Endothelial cell of umbilical vein (primary cell): ENCODE measurements at regions of chr2 and their contacts with region 1.

Region 1: DNA sequence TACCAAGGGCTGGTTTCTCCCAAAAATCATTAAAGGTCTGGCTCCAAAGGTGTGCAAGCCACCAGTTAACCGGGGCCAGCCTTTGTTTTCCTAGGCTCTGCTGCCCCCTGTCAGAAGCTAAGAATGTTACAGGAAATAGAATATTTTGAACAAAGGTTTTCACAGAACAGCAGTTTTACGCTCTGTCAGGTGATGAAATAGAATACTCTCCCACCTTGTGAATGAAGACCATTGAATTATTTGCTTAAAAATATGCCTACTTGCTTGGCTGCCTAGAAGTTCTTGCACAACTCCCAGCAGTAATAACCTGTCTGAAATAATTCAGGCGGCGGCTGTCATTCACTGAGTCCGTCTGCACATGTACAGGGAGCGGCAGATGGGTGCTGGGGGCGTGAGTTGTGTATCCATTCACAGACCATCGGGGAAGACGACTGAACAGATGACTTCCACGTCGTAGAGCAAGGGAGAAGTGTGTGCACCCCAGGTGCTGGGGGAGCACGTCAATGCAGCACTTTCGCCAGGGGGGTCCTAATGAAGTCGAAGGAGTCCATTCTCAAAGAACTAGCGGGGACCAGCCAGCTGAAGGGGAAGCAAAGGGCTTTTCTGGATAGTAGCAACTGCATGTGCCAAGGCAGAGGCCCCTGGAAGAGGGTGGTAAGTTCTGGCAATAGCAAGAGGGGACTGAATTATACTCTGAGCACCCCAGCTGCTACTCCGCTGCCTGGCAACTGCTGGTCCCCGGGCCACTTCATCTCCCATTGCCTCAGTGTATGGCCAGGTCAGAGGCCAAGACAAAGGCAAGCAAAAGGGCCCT is 56.1 kb downstream of the SF3B1 start:
- DNase-seq: peak; percentile 36
- H3K4me3 ChIP-seq: no peak overlapping the region
- H3K27ac ChIP-seq: no peak overlapping the region
- H3K4me1 ChIP-seq: no peaks in the 10 kb centered on the region
- H3K27me3 ChIP-seq: peaks cover 0 to 3% of the 10 kb centered on the region in 2 experiments
- CTCF ChIP-seq: peak; percentile 57 to 64
- POLR2A ChIP-seq: no peak

Region 2: GRCh38 chr2:196849895-196850294 is 528.8 kb before region 1 on chr2:
- CTCF ChIA-PET with region 1: interaction called, 10 read pairs
- POLR2A ChIA-PET with region 1: no interaction called
- dilution Hi-C with region 1: no loop called
- intact Hi-C with region 1: loop called (anchors 2 kb)
- DNase-seq: peak; percentile 43
- H3K4me3 ChIP-seq: no peak overlapping the region
- H3K27ac ChIP-seq: no peak overlapping the region
- H3K4me1 ChIP-seq: peaks cover 17% of the 10 kb centered on the region
- H3K27me3 ChIP-seq: no peaks in the 10 kb centered on the region
- CTCF ChIP-seq: peak; percentile 27 to 32
- POLR2A ChIP-seq: no peak

Region 3: DNA sequence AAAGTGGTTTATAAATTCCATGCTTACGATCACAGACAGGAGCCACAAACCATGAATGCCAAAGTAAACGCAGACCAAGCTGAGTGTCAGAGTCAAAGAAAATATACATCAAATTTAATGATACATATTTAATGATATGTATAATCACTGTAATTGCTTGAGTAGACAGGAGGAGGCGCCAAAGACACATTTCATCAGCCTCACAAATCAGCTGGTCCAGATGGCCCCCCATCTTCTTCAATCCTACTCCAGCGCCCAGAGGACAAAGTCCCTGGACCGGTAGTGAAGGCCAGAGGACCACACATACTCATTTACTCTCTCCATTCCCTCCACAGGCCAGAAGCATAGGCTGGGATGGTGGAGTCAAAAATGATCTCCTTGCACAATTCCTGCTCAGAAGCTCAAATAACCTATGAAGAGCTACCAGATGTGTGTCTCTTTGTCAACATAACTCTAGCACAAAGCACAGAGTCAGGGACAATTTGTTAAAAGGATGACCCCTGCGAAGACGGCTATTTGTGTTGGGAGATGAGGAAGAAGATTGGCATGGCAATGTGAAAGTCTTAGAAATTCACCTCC is 302.9 kb before region 1 on chr2:
- CTCF ChIA-PET with region 1: interaction called, 19 read pairs
- POLR2A ChIA-PET with region 1: no interaction called
- dilution Hi-C with region 1: no loop called
- intact Hi-C with region 1: loop called (anchors 1 kb)
- DNase-seq: no peak
- H3K4me3 ChIP-seq: no peak overlapping the region
- H3K27ac ChIP-seq: no peak overlapping the region
- H3K4me1 ChIP-seq: peaks cover 10% of the 10 kb centered on the region
- H3K27me3 ChIP-seq: no peaks in the 10 kb centered on the region
- CTCF ChIP-seq: peak; percentile 20 to 52
- POLR2A ChIP-seq: no peak

Region 4: DNA sequence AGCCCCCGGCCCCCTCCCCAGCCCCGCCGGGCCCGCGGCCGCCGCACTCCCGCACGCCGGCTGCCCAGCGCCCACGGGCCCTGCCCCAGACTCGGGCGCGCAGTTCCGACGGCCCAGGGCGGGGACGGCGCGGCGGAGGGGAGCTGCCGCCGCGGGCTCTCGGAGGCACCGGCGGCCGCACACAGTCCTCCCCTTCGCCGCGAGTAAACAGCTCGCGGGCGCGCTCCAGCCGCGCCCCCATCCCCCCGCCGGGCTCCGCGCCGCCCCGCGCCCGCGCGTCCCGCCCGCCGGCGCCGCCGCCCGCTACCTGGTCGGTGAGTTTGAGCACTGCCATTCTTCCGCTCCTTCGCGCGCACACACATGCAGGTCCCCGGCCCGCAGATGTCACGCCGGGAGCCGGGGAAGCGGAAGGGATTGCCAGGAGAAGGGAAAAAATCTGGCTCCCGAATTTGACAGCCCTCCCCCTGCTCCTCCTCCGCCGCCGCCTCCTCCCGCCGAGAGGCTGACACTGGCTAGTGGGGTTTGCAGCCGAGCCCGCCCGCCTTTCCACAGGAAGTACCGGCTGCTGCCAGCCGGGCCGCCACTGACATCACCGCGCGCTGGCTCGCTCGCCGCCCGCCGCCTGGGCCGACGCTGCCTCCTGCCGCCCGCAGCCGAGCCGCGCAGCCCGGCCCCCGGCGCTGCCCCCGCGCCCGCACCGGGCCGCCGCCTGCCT is 68.3 kb before region 1 on chr2 and contains the start of gene ANKRD44:
- CTCF ChIA-PET with region 1: interaction called, 4 read pairs
- POLR2A ChIA-PET with region 1: no interaction called
- dilution Hi-C with region 1: no loop called
- intact Hi-C with region 1: loop called (anchors 5 kb)
- DNase-seq: peak; percentile 72
- H3K4me3 ChIP-seq: peak within 1 kb of the TSS; percentile 65 to 91 (median 85)
- H3K27ac ChIP-seq: no peak within 1 kb of the TSS
- H3K4me1 ChIP-seq: peaks cover 12% of the 10 kb centered on the region
- H3K27me3 ChIP-seq: peaks cover 11 to 16% of the 10 kb centered on the region in 2 experiments
- CTCF ChIP-seq: no peak
- POLR2A ChIP-seq: no peak
- total RNA-seq, gene ANKRD44: 6.1 and 8.1 TPM in 2 replicates

Region 5: GRCh38 chr2:197464175-197464574 is 85.5 kb after region 1 on chr2:
- CTCF ChIA-PET with region 1: no interaction called
- POLR2A ChIA-PET with region 1: no interaction called
- dilution Hi-C with region 1: no loop called
- intact Hi-C with region 1: no loop called
- DNase-seq: no peak
- H3K4me3 ChIP-seq: no peak overlapping the region
- H3K27ac ChIP-seq: no peak overlapping the region
- H3K4me1 ChIP-seq: no peaks in the 10 kb centered on the region
- H3K27me3 ChIP-seq: no peaks in the 10 kb centered on the region
- CTCF ChIP-seq: no peak
- POLR2A ChIP-seq: no peak

Region 6: GRCh38 chr2:197571627-197572271 is 193.0 kb after region 1 on chr2:
- CTCF ChIA-PET with region 1: no interaction called
- POLR2A ChIA-PET with region 1: no interaction called
- dilution Hi-C with region 1: no loop called
- intact Hi-C with region 1: no loop called
- DNase-seq: no peak
- H3K4me3 ChIP-seq: no peak overlapping the region
- H3K27ac ChIP-seq: no peak overlapping the region
- H3K4me1 ChIP-seq: no peaks in the 10 kb centered on the region
- H3K27me3 ChIP-seq: no peaks in the 10 kb centered on the region
- CTCF ChIP-seq: no peak
- POLR2A ChIP-seq: no peak

Region 7: DNA sequence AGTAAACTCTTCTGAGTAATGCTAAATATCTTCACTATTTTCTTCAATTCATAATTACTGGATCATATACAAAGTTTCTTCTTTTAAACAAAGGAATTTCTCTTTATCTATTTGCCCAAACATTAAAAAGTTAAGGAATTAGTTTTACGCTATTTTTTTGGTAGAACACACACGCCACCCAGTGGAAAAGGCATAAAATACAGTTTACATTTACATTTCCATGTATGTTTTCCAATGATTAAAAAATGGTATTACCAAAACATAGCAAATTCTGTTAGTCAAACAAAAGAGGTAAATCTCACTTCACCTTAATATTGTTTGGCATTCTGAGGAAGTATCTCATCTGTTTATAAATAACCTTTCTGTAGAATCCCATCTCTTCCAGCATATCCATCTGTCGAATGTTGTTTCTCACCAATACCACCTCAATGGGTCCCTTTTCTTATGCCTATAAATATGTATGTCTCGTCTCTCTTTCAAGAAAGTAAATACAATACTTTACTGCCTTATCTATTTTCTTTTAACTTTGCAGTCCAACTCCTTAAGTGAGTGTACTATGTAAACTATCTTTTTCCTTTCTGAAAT is 399.2 kb after region 1 on chr2:
- CTCF ChIA-PET with region 1: interaction called, 16 read pairs
- POLR2A ChIA-PET with region 1: no interaction called
- dilution Hi-C with region 1: no loop called
- intact Hi-C with region 1: loop called (anchors 2 kb)
- DNase-seq: peak; percentile 58
- H3K4me3 ChIP-seq: no peak overlapping the region
- H3K27ac ChIP-seq: no peak overlapping the region
- H3K4me1 ChIP-seq: no peaks in the 10 kb centered on the region
- H3K27me3 ChIP-seq: no peaks in the 10 kb centered on the region
- CTCF ChIP-seq: peak; percentile 28 to 32
- POLR2A ChIP-seq: no peak

Region 8: DNA sequence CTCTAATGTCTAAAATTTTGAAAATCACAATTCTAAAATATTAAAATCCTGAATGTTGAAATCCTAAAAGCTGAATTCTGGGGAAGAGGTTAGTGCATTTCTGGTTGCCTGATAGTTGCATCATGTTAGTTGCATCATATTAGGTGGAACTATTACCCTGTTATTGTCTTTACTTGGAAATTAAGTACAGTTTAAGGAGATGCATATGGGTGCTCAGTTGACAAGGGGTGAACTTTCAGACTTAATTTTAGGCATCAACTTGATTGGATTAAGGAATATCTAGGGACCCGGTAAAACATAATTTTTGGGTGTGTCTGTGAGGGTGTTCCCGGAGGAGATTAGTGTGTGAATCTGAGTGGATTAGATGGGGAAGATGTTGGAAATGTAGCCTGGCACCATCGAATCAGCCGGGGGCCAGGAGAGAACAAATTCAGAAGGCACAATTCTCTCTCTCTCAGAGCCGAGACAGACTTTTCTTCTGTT is 835.5 kb after region 1 on chr2:
- CTCF ChIA-PET with region 1: no interaction called
- POLR2A ChIA-PET with region 1: no interaction called
- dilution Hi-C with region 1: no loop called
- intact Hi-C with region 1: no loop called
- DNase-seq: no peak
- H3K4me3 ChIP-seq: no peak overlapping the region
- H3K27ac ChIP-seq: no peak overlapping the region
- H3K4me1 ChIP-seq: no peaks in the 10 kb centered on the region
- H3K27me3 ChIP-seq: peaks cover 0 to 2% of the 10 kb centered on the region in 2 experiments
- CTCF ChIP-seq: no peak
- POLR2A ChIP-seq: no peak